SK-N-SH (cell line): ENCODE measurements at regions of chr6 and their contacts with region 1.

Region 1: DNA sequence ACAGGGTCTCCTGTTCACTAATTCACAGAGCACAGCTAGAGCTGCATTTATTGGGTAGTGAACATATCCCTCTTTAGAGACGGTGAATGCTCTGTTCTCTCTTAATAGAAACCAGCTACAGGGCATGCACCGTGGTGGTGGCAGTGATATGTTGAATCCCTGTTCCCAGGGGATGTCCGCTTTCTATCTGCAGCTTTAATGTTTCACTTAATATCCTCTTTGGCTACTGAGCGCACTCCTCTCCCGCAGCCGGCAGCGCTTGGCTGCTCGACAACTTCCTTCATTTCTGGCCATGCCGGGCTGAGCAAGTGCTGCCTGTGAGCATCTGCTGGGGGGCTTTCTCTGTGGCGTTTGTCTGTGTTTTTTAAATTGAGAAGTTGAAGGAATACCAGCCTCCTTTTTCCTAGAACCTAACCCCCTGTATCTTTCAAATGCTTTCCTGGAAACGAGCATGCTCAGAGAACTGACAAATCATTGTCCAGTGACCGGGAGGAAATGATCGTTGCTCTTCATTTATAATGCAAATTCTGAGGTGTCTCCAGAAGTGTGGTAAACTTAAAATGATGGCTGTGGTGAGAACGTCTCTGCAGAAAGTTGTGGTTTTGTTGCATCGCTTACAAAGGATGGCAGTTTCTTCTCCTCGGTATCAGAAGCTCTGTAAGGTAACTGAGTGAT is 297.9 kb downstream of the UTRN start:
- DNase-seq: peak; percentile 32
- H3K4me3 ChIP-seq: peak overlapping the region; percentile 48 to 60
- H3K27ac ChIP-seq: peak overlapping the region in 1 of 2 experiments; percentile 87; a peak in 2 of 4 replicates
- H3K4me1 ChIP-seq: peaks cover 0 to 14% of the 10 kb centered on the region in 2 experiments; a peak in 3 of 4 replicates
- H3K27me3 ChIP-seq: no peaks in the 10 kb centered on the region
- CTCF ChIP-seq: no peak
- EP300 ChIP-seq: peak in 1 of 2 experiments; percentile 39; a peak in 1 of 4 replicates
- RAD21 ChIP-seq: 0 out of 2 replicates have a peak, but pooled peaks have one; percentile 8

Region 2: DNA sequence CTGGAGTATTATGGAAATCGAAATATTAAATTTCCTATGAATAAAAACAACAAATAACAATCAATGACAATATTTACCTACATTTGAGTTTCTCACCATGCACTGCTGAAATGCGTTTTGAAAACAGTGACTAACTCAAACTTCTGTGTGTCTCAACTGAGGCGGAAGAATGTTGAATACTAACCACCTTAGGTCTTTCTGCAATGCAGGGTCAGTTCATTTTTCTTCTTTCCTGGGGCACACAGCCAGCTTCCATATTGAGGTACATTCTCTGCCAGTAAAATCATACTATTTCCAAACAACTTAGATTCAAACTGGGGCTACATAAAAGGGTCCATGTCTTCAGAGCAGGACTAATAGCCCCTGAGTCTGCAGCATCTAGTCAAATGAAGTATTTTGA is 12.2 kb after region 1 on chr6:
- CTCF ChIA-PET with region 1: interaction called, 20 read pairs
- POLR2A ChIA-PET with region 1: no interaction called
- DNase-seq: no peak
- H3K4me3 ChIP-seq: no peak overlapping the region
- H3K27ac ChIP-seq: no peak overlapping the region
- H3K4me1 ChIP-seq: no peaks in the 10 kb centered on the region
- H3K27me3 ChIP-seq: no peaks in the 10 kb centered on the region
- CTCF ChIP-seq: no peak
- EP300 ChIP-seq: no peak
- RAD21 ChIP-seq: no peak

Region 3: GRCh38 chr6:144931172-144932035 is 348.3 kb after region 1 on chr6:
- CTCF ChIA-PET with region 1: interaction called, 15 read pairs
- POLR2A ChIA-PET with region 1: no interaction called
- DNase-seq: peak; percentile 12
- H3K4me3 ChIP-seq: no peak overlapping the region; a peak in 1 of 4 replicates
- H3K27ac ChIP-seq: no peak overlapping the region
- H3K4me1 ChIP-seq: no peaks in the 10 kb centered on the region; a peak in 1 of 4 replicates
- H3K27me3 ChIP-seq: no peaks in the 10 kb centered on the region
- CTCF ChIP-seq: peak; percentile 69
- EP300 ChIP-seq: no peak
- RAD21 ChIP-seq: peak; percentile 72

Region 4: GRCh38 chr6:145206247-145206907 is 623.3 kb after region 1 on chr6:
- CTCF ChIA-PET with region 1: interaction called, 33 read pairs
- POLR2A ChIA-PET with region 1: no interaction called
- DNase-seq: peak; percentile 52
- H3K4me3 ChIP-seq: no peak overlapping the region
- H3K27ac ChIP-seq: peak overlapping the region; percentile 52 to 97
- H3K4me1 ChIP-seq: peaks cover 0 to 26% of the 10 kb centered on the region in 2 experiments; a peak in 2 of 4 replicates
- H3K27me3 ChIP-seq: no peaks in the 10 kb centered on the region
- CTCF ChIP-seq: no peak
- EP300 ChIP-seq: peak in 1 of 2 experiments; percentile 92; a peak in 2 of 4 replicates
- RAD21 ChIP-seq: peak; percentile 16; the same call in 1 of the 2 replicates

Region 5: DNA sequence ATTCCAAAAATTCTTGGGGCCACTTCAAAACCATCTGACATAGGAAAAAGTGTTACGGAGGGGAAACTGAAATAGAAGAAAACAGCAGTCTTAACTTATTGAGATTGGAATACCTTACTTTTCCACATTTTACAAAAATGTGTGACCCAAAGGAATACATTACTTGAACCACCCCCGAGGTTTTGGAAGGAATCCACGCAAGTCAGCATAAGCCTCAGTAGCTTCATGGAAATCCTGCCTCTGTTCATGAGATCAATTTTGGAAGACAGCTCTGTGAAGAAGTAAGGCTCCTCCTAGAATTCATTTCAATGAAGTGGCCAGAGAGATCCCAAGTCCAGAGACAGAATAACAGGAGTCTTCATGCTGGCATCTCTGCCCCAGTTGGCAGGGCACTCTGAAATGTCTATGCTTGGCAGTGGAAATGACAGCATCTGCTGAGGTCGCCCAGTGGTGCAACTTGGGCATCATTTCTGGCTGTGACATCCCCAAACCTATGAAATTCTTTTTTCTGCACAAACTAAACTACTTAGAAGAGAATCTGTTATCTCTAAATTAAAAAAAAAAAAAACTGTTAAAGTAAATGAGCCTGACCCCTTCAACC is 1019.8 kb after region 1 on chr6:
- CTCF ChIA-PET with region 1: interaction called, 14 read pairs
- POLR2A ChIA-PET with region 1: no interaction called
- DNase-seq: peak; percentile 34
- H3K4me3 ChIP-seq: no peak overlapping the region
- H3K27ac ChIP-seq: peak overlapping the region in 1 of 2 experiments; percentile 91; a peak in 2 of 4 replicates
- H3K4me1 ChIP-seq: peaks cover 0 to 9% of the 10 kb centered on the region in 2 experiments; a peak in 2 of 4 replicates
- H3K27me3 ChIP-seq: no peaks in the 10 kb centered on the region
- CTCF ChIP-seq: no peak
- EP300 ChIP-seq: no peak
- RAD21 ChIP-seq: peak; percentile 48

Region 6: GRCh38 chr6:145704143-145704781 is 1121.2 kb after region 1 on chr6:
- CTCF ChIA-PET with region 1: interaction called, 15 read pairs
- POLR2A ChIA-PET with region 1: no interaction called
- DNase-seq: peak; percentile 9
- H3K4me3 ChIP-seq: no peak overlapping the region
- H3K27ac ChIP-seq: no peak overlapping the region
- H3K4me1 ChIP-seq: peaks cover 0 to 9% of the 10 kb centered on the region in 2 experiments; a peak in 2 of 4 replicates
- H3K27me3 ChIP-seq: no peaks in the 10 kb centered on the region
- CTCF ChIP-seq: peak; percentile 63
- EP300 ChIP-seq: no peak
- RAD21 ChIP-seq: peak; percentile 51